ENCODE measurements at regions of chr9 and their contacts with region 1.

Region 1: DNA sequence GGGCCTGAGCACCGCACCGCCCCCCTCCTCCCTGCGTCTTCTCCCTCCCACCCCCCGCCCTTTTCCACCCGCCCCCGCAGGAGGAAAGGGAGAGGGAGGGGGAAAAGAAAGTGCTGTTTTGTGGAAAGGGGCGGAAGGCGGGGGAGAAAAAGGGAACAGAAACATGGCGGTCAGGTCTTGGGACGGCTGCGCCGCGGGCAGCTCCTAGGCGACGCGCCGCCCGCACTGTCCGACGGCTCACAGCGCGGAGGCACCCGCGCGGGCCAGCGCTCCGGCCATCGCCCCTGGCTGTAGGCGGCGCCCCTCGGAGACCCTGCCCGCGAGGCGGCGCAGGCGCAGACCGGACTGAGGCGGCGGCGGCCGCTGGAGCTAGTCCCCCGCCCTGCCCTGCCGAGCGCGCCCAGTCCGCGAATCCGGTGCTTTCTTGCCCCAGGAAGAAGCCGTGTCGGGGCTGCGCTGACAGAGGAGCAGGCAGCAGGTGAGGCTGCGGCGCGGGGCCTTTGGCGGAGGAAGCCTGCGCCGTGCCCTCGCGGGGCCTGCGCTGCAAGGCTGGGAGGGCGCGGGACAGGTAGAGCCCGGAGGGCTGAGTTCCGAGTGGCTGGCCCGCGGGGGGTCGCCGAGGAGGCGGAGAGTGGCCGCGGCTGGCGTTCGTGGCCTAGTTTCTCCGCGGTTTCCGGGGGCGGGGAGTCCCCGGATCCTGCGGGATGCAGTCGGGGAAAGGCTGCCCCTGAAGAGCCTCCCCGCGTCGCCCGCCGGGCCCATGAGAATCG is at the start of gene DENND4C:
- DNase-seq: peak; percentile 90

Region 2: DNA sequence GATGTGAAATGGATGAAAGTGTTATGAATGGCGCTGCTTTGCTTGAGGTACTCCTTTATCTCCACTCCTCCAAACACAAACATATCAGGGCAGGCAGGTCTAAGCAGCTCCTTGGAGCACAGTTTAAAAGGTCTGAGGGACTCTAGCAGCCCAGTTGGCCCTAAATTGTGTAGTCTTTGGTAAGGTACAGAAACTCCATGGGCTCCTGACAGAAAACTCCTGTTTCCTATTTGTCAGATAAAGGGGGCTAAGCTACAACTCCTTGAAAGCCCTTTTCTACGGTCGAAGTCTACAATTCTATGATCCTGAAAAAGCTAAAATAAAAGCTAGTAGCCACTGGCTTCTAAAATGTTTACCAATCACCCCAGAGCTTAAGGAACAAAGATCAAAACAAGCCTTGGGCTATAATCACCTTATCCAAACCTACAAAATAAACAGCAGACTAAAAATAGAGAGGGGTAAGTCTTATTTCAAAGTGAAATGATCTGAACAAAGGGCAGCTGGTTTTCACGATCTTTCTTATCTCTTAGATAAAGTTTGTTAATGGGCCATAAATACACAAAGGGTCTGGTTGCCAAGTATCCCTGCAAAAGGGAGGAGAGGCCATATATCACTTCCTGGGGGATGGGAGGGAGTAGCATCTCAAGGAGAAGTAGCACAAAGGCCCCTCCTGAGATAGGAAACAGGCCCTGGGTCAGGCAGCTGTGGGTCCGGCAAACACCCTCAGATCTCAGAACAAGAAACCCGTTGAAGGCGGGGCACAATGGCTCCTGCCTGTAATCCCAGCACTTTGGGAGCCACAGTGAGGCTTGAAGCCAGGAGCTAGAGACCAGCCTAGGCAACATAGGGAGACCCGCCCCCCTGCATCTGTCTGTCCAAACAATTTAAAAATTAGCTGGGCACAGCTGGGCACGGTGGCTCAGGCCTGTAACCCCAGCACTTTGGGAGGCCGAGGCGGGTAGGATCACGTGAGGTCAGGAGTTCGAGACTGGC is 28.3 kb before region 1 on chr9:
- CTCF ChIA-PET with region 1: no interaction called
- POLR2A ChIA-PET with region 1: interaction called, 10 read pairs
- DNase-seq: peak; percentile 73

Region 3: DNA sequence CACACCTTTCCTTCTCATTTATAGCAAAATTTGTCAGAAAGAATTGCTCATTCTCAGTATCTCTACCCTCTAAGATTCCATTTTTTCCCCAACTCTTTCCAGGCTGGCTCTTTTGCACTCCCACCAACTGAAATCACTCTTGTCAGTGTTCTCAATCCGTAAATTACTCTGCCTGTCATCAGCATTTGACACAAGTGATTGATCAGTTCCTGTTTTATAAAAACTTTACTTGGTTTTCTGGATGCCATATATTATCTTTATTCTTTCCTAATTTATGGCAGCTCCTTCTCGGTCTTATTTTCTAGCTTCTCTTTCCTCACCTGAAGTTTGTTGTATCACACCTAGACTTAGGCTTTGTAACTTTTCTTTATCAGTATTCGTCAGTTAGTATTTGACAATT is 16.4 kb after region 1 on chr9:
- CTCF ChIA-PET with region 1: no interaction called
- POLR2A ChIA-PET with region 1: interaction called, 15 read pairs
- DNase-seq: no peak

Measured in HEK293T (cell line).